ENCODE measurements at regions of chr6 and their contacts with region 1.

Region 1: DNA sequence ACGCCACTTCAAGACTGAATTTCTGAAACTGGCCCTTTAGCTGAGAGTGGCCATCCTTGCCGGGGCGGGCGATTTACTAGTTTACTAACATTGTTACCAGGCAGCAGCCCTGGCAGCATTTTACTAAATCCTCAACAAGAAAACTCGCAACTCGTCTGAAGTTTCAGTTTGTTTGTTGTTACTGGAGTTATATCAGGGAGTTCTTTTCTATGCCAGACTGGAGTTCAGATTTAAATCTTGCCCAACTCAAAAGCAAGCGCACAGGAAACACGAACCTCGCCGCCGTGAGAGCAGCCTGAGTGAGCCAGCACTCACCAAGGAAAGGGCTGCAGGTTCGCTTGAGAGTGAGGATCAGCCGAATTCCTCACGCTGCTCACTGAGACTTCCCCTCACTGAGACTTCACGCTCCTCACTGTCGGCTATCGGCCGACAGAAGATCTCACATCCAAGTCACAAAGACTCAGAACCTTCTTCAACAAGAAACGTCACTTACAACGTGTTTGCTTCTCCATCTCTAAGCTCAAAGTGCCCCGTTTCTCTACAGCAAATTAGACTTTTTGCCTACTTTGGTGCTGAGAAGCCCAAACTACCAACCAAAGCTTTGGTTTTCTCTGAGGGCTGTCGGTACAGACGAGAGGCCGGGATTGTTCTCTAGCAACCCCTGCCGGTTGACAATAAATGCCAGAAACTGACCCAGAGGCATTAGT is 78.9 kb downstream of the OLIG3 start:
- DNase-seq: peak; percentile 40 to 51
- H3K4me3 ChIP-seq: peak overlapping the region; percentile 45
- H3K27ac ChIP-seq: no peak overlapping the region
- H3K4me1 ChIP-seq: no peaks in the 10 kb centered on the region
- H3K27me3 ChIP-seq: no peaks in the 10 kb centered on the region
- CTCF ChIP-seq: peak; percentile 71

Region 2: DNA sequence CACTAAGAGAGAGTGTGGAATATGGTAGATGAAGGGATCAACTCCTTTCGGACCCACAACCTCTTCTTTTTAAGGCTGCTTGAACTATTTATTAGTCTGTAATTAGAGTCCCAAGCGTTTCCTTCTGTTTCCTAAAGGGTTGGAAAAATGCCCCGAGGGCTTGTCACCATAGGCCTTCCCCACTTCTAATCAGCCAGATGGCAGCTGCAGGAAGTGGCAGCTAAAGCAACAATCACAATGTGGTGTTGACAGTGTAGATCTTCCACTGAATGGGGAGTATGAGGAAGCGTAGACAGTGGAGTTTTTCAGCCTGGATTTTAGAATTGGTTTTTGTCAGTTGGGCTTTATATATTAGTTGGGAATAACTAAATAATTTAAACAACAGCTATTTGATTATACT is 452.6 kb before region 1 on chr6:
- CTCF ChIA-PET with region 1: no interaction called
- POLR2A ChIA-PET with region 1: no interaction called
- intact Hi-C with region 1: no loop called
- DNase-seq: peak; percentile 25 to 48
- H3K4me3 ChIP-seq: no peak overlapping the region
- H3K27ac ChIP-seq: no peak overlapping the region
- H3K4me1 ChIP-seq: peaks cover 8% of the 10 kb centered on the region; the same call in 1 of the 2 replicates
- H3K27me3 ChIP-seq: no peaks in the 10 kb centered on the region
- CTCF ChIP-seq: no peak

Region 3: GRCh38 chr6:137094411-137095008 is 320.8 kb before region 1 on chr6:
- CTCF ChIA-PET with region 1: interaction called, 3 read pairs
- POLR2A ChIA-PET with region 1: no interaction called
- intact Hi-C with region 1: loop called (anchors 1 kb)
- DNase-seq: peak; percentile 53 to 82
- H3K4me3 ChIP-seq: no peak overlapping the region
- H3K27ac ChIP-seq: no peak overlapping the region
- H3K4me1 ChIP-seq: peaks cover 5% of the 10 kb centered on the region
- H3K27me3 ChIP-seq: no peaks in the 10 kb centered on the region
- CTCF ChIP-seq: peak; percentile 92

Region 4: DNA sequence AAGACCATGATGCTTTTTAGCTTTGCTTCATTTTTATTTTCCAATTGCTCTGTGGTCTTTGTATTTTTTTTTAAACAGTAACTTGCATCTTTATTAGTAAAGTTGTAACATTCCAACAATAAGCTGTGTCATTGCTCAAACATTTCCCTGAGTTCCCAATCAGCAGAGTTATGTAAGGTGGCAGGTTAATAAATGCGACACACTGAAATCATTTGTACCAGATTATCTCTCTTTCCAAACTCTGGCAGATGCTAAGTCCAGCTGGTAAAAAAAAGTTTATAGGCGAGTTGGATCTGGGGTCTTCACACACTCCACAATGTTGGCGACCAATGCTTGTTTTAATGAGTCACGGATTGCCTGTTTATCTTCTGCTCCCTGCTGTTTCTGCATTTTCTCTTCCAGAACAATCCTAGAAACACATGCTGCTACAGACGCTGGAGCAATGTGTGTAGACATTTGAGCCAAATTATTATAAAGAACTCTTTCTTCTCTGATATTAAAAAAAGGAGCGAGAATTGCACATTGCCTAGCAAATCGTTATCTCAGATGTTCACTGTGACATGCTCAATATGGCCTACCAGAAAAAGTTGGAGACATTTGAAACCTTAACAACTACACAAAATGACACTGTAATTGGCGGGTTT is 82.5 kb before region 1 on chr6:
- CTCF ChIA-PET with region 1: no interaction called
- POLR2A ChIA-PET with region 1: no interaction called
- intact Hi-C with region 1: no loop called
- DNase-seq: peak in 1 of 2 experiments; percentile 22
- H3K4me3 ChIP-seq: no peak overlapping the region
- H3K27ac ChIP-seq: no peak overlapping the region
- H3K4me1 ChIP-seq: no peaks in the 10 kb centered on the region
- H3K27me3 ChIP-seq: no peaks in the 10 kb centered on the region
- CTCF ChIP-seq: no peak

Region 5: GRCh38 chr6:137518386-137518983 is 103.2 kb after region 1 on chr6:
- CTCF ChIA-PET with region 1: no interaction called
- POLR2A ChIA-PET with region 1: no interaction called
- intact Hi-C with region 1: no loop called
- DNase-seq: no peak
- H3K4me3 ChIP-seq: no peak overlapping the region
- H3K27ac ChIP-seq: no peak overlapping the region
- H3K4me1 ChIP-seq: no peaks in the 10 kb centered on the region
- H3K27me3 ChIP-seq: peaks cover 42% of the 10 kb centered on the region
- CTCF ChIP-seq: no peak